ENCODE measurements at regions of chr6 and their contacts with region 1.

Region 1: GRCh38 chr6:42726485-42727086 is 4.2 kb upstream of the PRPH2 start:
- DNase-seq: peak; percentile 71 to 86 (median 78)
- ATAC-seq: peak; percentile 88 to 95 (median 94)
- H3K4me3 ChIP-seq: peak overlapping the region; percentile 18 to 71 (median 57)
- H3K27ac ChIP-seq: peak overlapping the region; percentile 2 to 90 (median 72)
- H3K4me1 ChIP-seq: peaks cover 0 to 18% (median 11%) of the 10 kb centered on the region in 12 donors
- H3K27me3 ChIP-seq: no peaks in the 10 kb centered on the region
- CTCF ChIP-seq: peak; percentile 91 to 99 (median 96)
- POLR2A ChIP-seq: peak in 1 of 2 donors; percentile 15

Region 2: DNA sequence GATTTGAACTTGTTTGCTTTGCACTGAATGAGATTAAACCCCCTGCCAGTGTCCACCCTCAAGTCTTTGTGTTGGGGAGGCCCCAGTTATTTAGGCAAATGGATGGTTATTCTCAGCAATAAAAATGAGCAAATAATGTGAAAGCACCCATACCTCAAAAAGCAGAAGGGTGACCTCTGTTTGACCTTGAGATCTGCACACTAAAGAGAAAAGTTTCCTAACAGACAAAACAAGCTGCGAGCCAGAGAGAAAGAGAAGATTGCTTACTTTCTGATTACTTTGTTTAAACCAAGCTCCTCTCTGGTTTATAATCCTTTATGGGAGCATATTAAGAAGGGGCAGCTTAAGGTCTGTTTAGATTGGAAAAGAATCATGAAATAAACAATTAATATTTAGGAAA is 244.4 kb before region 1 on chr6:
- intact Hi-C with region 1: no loop called
- DNase-seq: no peak
- ATAC-seq: no peak
- H3K4me3 ChIP-seq: no peak overlapping the region
- H3K27ac ChIP-seq: peak overlapping the region in 1 of 12 donors; percentile 0
- H3K4me1 ChIP-seq: no peaks in the 10 kb centered on the region
- H3K27me3 ChIP-seq: no peaks in the 10 kb centered on the region
- CTCF ChIP-seq: no peak
- POLR2A ChIP-seq: no peak

Region 3: DNA sequence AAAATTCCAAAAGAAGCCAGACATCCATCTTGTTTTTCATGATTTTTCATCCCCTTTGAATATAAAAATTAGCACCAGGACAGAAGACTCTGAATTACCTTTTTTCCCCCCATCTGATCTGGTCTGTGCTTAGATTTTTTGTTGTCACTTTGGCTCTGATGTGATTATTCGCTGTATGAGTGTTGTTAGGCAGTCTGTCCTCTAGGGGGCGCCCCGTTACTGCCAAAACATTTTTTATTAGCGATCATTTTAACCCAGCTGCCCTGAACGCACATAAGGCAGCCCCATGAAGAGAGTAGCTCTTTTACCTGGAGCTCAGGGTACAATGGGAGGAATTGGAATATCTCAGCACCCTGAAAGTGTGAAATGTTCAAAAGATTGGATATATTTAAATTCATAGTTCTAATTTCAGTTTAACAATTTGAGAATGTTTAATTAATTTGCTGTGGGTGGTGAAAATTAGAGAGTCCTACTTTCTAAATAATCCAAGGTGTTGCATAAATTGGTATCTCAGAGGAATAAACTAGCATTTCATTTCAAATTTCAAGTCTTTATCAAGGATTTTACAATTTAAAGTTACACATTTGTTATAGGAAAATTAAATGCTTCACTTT is 64.9 kb before region 1 on chr6:
- intact Hi-C with region 1: loop called (anchors 1 to 5 kb)
- DNase-seq: peak; percentile 67 to 82 (median 77)
- ATAC-seq: peak; percentile 64 to 85 (median 77)
- H3K4me3 ChIP-seq: no peak overlapping the region
- H3K27ac ChIP-seq: peak overlapping the region in 1 of 12 donors; percentile 10
- H3K4me1 ChIP-seq: peaks cover 0 to 5% (median 0%) of the 10 kb centered on the region in 12 donors
- H3K27me3 ChIP-seq: no peaks in the 10 kb centered on the region
- CTCF ChIP-seq: peak; percentile 80 to 97 (median 90)
- POLR2A ChIP-seq: no peak

Region 4: GRCh38 chr6:42692137-42692911 is 34.3 kb before region 1 on chr6:
- intact Hi-C with region 1: loop called in 3 of 10 experiments (anchors 2 to 5 kb)
- DNase-seq: peak in 1 of 5 donors; percentile 55
- ATAC-seq: peak in 3 of 4 donors; percentile 44 to 47 (median 45)
- H3K4me3 ChIP-seq: no peak overlapping the region
- H3K27ac ChIP-seq: peak overlapping the region in 11 of 12 donors; percentile 1 to 77 (median 50)
- H3K4me1 ChIP-seq: peaks cover 0 to 43% (median 9%) of the 10 kb centered on the region in 12 donors
- H3K27me3 ChIP-seq: no peaks in the 10 kb centered on the region
- CTCF ChIP-seq: no peak
- POLR2A ChIP-seq: no peak

Region 5: GRCh38 chr6:42745707-42746462 is 19.3 kb after region 1 on chr6 and contains the start of gene TBCC:
- intact Hi-C with region 1: loop called in 1 of 10 experiments (anchors 2 kb)
- DNase-seq: peak; percentile 96 to 97 (median 97)
- ATAC-seq: peak; percentile 94 to 96 (median 95)
- H3K4me3 ChIP-seq: peak within 1 kb of the TSS; percentile 75 to 99 (median 96)
- H3K27ac ChIP-seq: peak within 1 kb of the TSS; percentile 85 to 97 (median 94)
- H3K4me1 ChIP-seq: peaks cover 0 to 37% (median 24%) of the 10 kb centered on the region in 12 donors
- H3K27me3 ChIP-seq: no peaks in the 10 kb centered on the region
- CTCF ChIP-seq: no peak
- POLR2A ChIP-seq: peak; percentile 79 to 93
- total RNA-seq, gene TBCC: 10.4 to 21.7 (median 15.4) TPM

Region 6: GRCh38 chr6:42777126-42777822 is 50.7 kb after region 1 on chr6:
- intact Hi-C with region 1: no loop called
- DNase-seq: no peak
- ATAC-seq: no peak
- H3K4me3 ChIP-seq: no peak overlapping the region
- H3K27ac ChIP-seq: peak overlapping the region in 1 of 12 donors; percentile 50
- H3K4me1 ChIP-seq: peaks cover 0 to 58% (median 4%) of the 10 kb centered on the region in 12 donors
- H3K27me3 ChIP-seq: no peaks in the 10 kb centered on the region
- CTCF ChIP-seq: no peak
- POLR2A ChIP-seq: no peak

Region 7: GRCh38 chr6:42819803-42820511 is 93.4 kb after region 1 on chr6:
- intact Hi-C with region 1: loop called in 1 of 10 experiments (anchors 10 kb)
- DNase-seq: no peak
- ATAC-seq: peak in 2 of 4 donors; percentile 56 to 58
- H3K4me3 ChIP-seq: peak overlapping the region in 2 of 12 donors; percentile 20 to 39
- H3K27ac ChIP-seq: peak overlapping the region in 10 of 12 donors; percentile 47 to 79 (median 60)
- H3K4me1 ChIP-seq: peaks cover 0 to 30% (median 17%) of the 10 kb centered on the region in 12 donors
- H3K27me3 ChIP-seq: no peaks in the 10 kb centered on the region
- CTCF ChIP-seq: peak in 2 of 12 donors; percentile 16 to 25
- POLR2A ChIP-seq: no peak

Region 8: DNA sequence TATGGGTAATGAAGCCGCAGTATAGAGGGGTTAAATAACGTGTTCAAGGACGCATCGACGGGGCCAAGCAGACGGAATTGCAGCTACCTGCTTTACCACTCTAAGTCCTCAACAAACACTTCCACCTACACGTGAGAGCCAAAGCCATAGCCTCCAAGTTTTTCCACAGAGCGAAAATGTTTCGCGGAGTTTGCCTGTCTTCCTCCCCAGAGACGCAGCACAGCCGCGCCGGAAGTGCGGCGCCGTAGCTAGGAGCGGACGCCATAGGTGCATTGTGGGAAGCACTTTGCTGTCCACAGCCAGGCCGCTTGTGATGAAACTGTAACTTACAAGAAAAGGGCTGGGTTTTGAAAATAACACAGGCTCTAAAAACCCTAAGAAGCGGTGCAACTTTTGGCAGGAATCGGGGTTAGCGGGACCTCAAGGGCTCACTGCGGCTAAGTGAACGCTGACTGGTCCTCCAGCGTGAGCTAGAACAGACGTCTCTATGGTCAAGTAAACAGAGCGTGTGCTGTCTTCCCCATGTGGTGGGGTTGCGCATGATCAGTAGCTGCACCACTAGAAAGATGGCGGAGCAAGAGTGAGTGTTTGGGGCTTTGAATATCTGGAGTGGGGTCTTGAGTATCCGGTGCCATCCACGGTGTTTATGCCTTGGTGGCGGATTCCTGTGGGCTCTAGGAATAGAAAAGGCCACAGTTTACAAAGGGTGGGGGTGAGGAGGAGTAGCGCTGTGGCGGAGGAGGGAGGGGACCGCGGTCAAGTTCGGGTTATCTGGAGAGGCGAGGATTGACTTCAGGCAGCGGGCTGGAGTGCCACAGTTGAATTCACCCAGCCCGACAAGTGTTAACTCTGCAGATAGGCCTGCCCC is 153.0 kb after region 1 on chr6 and contains the start of gene RPL7L1:
- intact Hi-C with region 1: loop called in 8 of 10 experiments (anchors 2 to 10 kb)
- DNase-seq: peak; percentile 84 to 91 (median 85)
- ATAC-seq: peak; percentile 98 to 99 (median 98)
- H3K4me3 ChIP-seq: peak within 1 kb of the TSS; percentile 24 to 84 (median 76)
- H3K27ac ChIP-seq: peak within 1 kb of the TSS; percentile 82 to 99 (median 92)
- H3K4me1 ChIP-seq: peaks cover 0 to 34% (median 15%) of the 10 kb centered on the region in 12 donors
- H3K27me3 ChIP-seq: no peaks in the 10 kb centered on the region
- CTCF ChIP-seq: peak in 3 of 12 donors; percentile 7 to 28 (median 21)
- POLR2A ChIP-seq: peak in 1 of 2 donors; percentile 38
- total RNA-seq, gene RPL7L1: 39.8 to 71.1 (median 49.2) TPM

Region 9: GRCh38 chr6:43013843-43014433 is 287.4 kb after region 1 on chr6 and contains the starts of genes KLHDC3 and MEA1:
- intact Hi-C with region 1: no loop called
- DNase-seq: peak; percentile 99
- ATAC-seq: peak; percentile 92 to 96 (median 94)
- H3K4me3 ChIP-seq: peak within 1 kb of the TSS; percentile 51 to 90 (median 74)
- H3K27ac ChIP-seq: peak within 1 kb of the TSS; percentile 25 to 97 (median 84)
- H3K4me1 ChIP-seq: peaks cover 4 to 57% (median 47%) of the 10 kb centered on the region in 12 donors
- H3K27me3 ChIP-seq: no peaks in the 10 kb centered on the region
- CTCF ChIP-seq: no peak
- POLR2A ChIP-seq: peak; percentile 22 to 65
- total RNA-seq, gene KLHDC3: 79.4 to 180 (median 102) TPM
- total RNA-seq, gene MEA1: 24.5 to 46.2 (median 32.1) TPM

Measured in heart left ventricle (tissue), 16 donors.